Prostate gland (tissue), 2 donors: ENCODE measurements at regions of chr9 and their contacts with region 1.

Region 1: DNA sequence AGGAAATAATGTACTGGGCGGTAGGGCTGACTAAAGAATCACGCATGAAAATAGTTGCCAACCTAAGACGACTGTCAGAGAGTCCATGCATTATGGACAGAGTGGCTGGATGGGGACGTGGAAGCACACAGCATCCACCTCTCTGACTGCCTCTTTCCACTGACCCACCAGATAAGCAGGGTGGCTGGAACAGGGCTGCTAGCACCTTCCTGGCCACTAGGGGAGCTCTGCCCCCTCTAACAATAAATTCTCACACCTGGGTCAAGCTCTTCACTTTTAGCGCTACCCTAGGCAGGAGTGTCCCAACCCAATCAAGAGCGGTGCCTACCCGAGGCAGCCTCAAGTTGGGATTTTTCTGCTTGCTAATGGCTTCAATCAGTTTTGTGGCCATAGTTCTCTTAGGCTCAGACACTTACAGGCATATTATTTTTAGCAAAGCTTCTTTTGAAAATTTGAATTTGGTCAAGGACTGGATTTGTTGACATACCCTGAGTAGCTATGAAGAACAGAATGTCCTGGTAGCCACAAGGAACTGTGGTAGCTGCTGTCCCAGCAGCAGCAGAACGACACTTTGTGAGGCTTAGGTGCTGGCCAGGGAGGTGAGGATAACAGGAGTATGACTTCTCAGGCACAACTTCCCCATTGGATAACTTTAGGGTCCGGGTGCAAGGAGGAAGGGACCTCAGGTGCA is 6.9 kb upstream of the TPM2 start:
- DNase-seq: peak; percentile 39
- H3K4me3 ChIP-seq: no peak overlapping the region
- H3K27ac ChIP-seq: peak overlapping the region; percentile 31 to 42
- H3K4me1 ChIP-seq: no peaks in the 10 kb centered on the region
- H3K27me3 ChIP-seq: no peaks in the 10 kb centered on the region
- CTCF ChIP-seq: peak; percentile 54 to 71 (median 64)
- POLR2A ChIP-seq: no peak

Region 2: DNA sequence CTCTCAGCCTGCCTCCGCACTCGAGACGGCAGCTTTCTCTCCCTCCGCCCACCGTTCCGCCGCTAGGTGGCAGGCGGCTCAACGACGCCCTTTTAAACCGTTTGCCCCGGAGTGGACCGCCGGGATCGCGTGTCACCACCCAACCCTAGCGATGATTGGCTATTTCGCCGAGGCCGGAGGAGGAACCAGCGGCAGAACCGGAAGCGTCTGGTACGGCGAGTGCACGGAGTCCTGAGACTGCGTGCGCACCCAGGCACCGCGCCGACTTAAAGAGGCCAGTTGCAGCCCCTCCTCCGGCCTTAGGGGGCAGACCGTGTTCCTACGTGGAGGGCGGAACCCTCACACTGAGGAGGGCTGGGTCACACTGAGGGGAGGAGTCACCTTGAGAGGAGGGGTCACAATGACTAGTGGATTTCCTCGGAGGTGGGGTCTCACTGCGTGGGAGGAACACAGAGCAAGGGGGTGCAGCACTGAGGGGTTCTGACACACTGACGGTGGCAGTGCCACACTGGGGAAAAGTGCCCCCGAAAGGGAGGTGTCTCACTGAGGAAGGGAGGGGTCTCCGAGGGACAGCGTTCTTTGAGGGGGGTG is 92.6 kb before region 1 on chr9:
- intact Hi-C with region 1: loop called (anchors 10 kb)
- DNase-seq: peak; percentile 100
- H3K4me3 ChIP-seq: peak overlapping the region; percentile 79 to 82
- H3K27ac ChIP-seq: peak overlapping the region; percentile 94
- H3K4me1 ChIP-seq: peaks cover 13% of the 10 kb centered on the region
- H3K27me3 ChIP-seq: no peaks in the 10 kb centered on the region
- CTCF ChIP-seq: peak; percentile 90 to 99 (median 99)
- POLR2A ChIP-seq: peak; percentile 90

Region 3: DNA sequence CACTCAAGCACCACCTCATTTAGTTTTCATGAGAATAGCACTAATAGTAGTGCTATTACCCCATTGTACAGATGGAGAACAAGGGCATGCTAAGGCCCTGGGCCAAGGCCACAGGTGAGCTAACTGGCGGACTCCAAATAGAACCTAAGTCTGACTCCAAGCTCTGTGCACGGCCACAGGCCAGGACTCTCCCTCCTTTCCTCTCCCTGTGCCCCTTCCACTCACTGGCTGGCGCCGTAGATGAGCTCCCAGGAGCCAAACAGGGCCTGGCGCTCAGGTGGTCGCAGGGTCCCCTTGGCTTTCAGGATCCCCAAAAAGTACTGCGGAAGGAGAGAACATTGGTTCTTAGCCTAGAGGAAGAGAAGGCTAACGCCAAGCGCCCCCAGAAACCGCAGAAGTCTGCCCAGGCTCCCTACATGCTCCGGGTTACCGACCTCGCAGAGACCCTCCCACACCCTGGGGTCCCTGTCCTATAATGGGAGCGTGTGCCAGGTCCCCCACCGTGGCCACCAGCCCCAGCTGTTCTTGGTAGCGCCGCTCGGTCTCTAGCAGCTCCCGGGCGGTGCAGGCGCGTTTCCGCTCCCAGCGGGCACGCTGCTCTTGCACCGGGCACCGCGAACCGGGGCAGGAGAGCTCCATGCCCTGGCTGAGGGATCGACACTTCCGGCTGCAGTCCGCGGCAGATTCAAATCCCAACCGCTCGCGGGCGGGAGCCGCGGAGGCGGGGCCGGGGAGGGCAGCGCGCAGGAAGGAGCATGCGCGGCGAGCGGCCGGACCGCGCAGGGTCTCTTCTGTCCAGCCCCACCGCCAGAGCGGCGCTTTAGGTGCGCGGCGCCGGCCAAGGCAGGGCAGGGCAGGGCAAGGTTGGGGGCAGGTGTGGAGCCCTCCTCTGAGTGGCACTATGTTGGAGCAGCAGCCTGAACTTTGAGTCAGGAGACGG is 31.9 kb before region 1 on chr9 and contains the start of gene ARHGEF39:
- intact Hi-C with region 1: loop called (anchors 5 kb)
- DNase-seq: peak; percentile 59
- H3K4me3 ChIP-seq: peak within 1 kb of the TSS; percentile 23 to 44
- H3K27ac ChIP-seq: peak within 1 kb of the TSS; percentile 43 to 70
- H3K4me1 ChIP-seq: no peaks in the 10 kb centered on the region
- H3K27me3 ChIP-seq: no peaks in the 10 kb centered on the region
- CTCF ChIP-seq: peak in 3 of 4 experiments; percentile 19 to 36 (median 22)
- POLR2A ChIP-seq: peak; percentile 60
- total RNA-seq, gene ARHGEF39: 1.1 to 1.8 TPM

Region 4: GRCh38 chr9:35726881-35727438 is 30.3 kb after region 1 on chr9:
- intact Hi-C with region 1: loop called (anchors 2 kb)
- DNase-seq: no peak
- H3K4me3 ChIP-seq: no peak overlapping the region
- H3K27ac ChIP-seq: peak overlapping the region; percentile 88 to 96
- H3K4me1 ChIP-seq: peaks cover 22% of the 10 kb centered on the region
- H3K27me3 ChIP-seq: no peaks in the 10 kb centered on the region
- CTCF ChIP-seq: no peak
- POLR2A ChIP-seq: no peak

Region 5: DNA sequence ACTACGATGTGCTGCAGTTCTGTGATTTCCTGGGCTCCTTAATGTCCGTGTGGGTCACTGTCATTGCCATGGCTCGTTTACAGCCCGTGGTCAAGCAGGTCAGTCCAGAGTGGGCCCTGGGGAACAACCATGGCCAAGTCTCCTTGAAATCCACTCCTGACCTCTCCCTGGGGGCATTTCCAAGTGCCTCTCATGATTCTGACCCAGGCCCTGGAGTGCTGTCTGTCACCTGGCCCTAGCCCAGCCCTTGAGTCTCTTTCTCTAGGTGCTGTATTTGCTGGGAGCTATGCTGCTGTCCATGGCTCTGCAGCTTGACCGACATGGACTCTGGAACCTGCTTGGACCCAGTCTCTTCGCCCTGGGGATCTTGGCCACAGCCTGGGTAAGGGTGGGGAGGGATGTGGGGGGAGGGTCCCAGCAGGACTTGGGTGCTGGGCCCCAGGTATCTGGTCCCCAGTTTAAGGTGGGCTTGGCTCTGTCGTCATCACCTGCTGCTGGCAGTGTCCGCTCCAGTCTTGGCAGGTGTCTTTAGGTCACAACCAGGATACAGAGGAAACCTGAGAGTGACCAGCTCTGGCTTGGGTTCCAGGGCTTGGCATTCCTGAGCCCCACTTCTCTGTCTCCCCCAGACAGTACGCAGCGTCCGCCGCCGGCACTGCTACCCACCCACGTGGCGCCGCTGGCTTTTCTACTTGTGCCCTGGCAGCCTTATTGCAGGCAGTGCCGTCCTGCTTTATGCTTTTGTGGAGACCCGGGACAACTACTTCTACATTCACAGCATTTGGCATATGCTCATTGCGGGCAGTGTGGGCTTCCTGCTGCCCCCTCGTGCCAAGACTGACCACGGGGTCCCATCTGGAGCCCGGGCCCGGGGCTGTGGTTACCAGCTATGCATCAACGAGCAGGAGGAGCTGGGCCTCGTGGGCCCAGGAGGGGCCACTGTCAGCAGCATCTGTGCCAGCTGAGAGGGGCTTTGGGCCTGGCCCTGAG is 156.5 kb after region 1 on chr9:
- intact Hi-C with region 1: no loop called
- DNase-seq: no peak
- H3K4me3 ChIP-seq: no peak overlapping the region
- H3K27ac ChIP-seq: no peak overlapping the region
- H3K4me1 ChIP-seq: no peaks in the 10 kb centered on the region
- H3K27me3 ChIP-seq: no peaks in the 10 kb centered on the region
- CTCF ChIP-seq: no peak
- POLR2A ChIP-seq: no peak

Region 6: DNA sequence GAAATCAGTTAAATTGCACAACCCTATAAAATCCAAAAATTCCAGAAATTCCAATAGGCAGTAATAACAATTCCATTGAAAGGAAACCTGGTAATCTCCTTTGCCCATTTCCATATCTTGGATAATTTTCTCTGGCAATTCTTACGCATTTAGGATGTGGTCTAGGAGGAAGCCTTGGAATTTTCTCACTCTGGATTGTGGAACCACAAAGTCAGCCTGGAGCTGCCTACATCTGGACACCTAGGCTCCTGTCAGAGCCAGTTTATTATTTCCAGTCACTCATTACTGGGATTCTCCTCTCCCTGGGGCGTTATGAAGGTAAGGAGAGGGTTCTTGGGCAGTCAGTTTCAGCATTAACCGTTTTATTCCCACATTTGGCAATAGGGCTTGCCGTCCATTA is 601.9 kb after region 1 on chr9:
- intact Hi-C with region 1: no loop called
- DNase-seq: no peak
- H3K4me3 ChIP-seq: no peak overlapping the region
- H3K27ac ChIP-seq: no peak overlapping the region
- H3K4me1 ChIP-seq: no peaks in the 10 kb centered on the region
- H3K27me3 ChIP-seq: no peaks in the 10 kb centered on the region
- CTCF ChIP-seq: no peak
- POLR2A ChIP-seq: no peak

Region 7: DNA sequence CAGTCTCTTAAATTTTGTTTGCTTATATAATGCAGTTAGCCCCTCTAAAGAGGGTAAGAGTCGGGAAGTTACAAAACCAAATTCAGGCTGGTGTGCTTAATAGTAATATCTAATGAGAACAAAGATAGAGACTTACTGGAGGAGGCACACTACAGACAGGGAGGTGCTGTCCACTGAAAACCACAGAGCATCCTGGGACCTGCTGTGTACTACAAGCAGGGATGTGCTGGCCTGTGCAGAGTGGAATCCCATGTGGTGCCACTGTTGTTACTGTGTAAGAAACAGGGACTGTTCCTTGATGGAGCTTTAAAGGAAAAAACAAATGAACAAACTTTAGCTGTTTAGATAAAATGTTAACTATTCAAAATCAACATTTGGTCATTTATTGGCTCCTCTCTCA is 661.0 kb after region 1 on chr9:
- intact Hi-C with region 1: no loop called
- DNase-seq: no peak
- H3K4me3 ChIP-seq: no peak overlapping the region
- H3K27ac ChIP-seq: no peak overlapping the region
- H3K4me1 ChIP-seq: no peaks in the 10 kb centered on the region
- H3K27me3 ChIP-seq: no peaks in the 10 kb centered on the region
- CTCF ChIP-seq: no peak
- POLR2A ChIP-seq: no peak